Calu3 (cell line): ENCODE measurements at regions of chr7 and their contacts with region 1.

Region 1: GRCh38 chr7:28926871-28927597 is 31.1 kb downstream of the TRIL start:
- DNase-seq: peak; percentile 71
- H3K4me3 Mint-ChIP-seq: peak overlapping the region; percentile 78
- H3K27ac Mint-ChIP-seq: peak overlapping the region; percentile 7
- H3K4me1 Mint-ChIP-seq: peaks cover 27% of the 10 kb centered on the region
- H3K27me3 Mint-ChIP-seq: no peaks in the 10 kb centered on the region
- CTCF ChIP-seq: peak; percentile 81

Region 2: DNA sequence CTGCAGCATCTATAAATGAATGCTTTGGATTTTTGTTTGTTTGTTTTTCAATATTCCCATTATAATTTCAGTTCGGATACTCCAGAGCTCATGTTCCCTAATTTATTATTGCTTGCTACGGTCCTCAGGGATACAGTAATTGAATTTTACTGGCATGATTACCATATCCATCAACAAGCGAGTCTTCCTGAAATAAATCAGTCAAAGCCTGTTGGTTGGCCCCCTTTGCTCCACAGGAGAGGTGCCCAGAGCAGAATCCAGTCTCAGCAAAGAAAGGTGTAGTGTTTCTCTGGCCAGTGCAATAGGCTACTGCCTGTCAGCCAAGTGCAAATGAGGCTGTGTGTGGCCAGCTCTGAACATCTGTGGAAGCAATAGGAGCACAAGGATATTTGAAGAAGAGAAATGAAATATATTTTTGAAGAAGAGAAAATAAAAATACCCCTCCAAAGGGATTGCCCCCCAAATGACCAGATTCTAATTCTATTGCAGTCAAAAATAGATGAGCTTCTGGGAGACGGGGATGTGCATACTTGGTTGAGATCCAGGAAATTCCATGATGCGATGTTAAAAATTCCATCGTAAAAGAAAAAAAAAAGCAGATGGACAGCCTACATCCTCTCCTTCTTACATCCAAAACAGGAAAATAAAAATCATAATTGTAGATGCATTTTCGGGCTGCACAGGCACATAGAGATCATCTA is 13.0 kb after region 1 on chr7:
- CTCF ChIA-PET with region 1: interaction called, 11 read pairs
- intact Hi-C with region 1: no loop called
- DNase-seq: no peak
- H3K4me3 Mint-ChIP-seq: no peak overlapping the region
- H3K27ac Mint-ChIP-seq: no peak overlapping the region
- H3K4me1 Mint-ChIP-seq: no peaks in the 10 kb centered on the region
- H3K27me3 Mint-ChIP-seq: no peaks in the 10 kb centered on the region
- CTCF ChIP-seq: no peak

Region 3: GRCh38 chr7:28980451-28980891 is 53.4 kb after region 1 on chr7:
- CTCF ChIA-PET with region 1: no interaction called
- intact Hi-C with region 1: no loop called
- DNase-seq: no peak
- H3K4me3 Mint-ChIP-seq: no peak overlapping the region
- H3K27ac Mint-ChIP-seq: no peak overlapping the region
- H3K4me1 Mint-ChIP-seq: peaks cover 30% of the 10 kb centered on the region
- H3K27me3 Mint-ChIP-seq: no peaks in the 10 kb centered on the region
- CTCF ChIP-seq: no peak

Region 4: GRCh38 chr7:29105752-29106668 is 179.0 kb after region 1 on chr7:
- CTCF ChIA-PET with region 1: interaction called, 174 read pairs
- intact Hi-C with region 1: loop called (anchors 1 kb)
- DNase-seq: peak; percentile 75
- H3K4me3 Mint-ChIP-seq: no peak overlapping the region
- H3K27ac Mint-ChIP-seq: no peak overlapping the region
- H3K4me1 Mint-ChIP-seq: peaks cover 37% of the 10 kb centered on the region
- H3K27me3 Mint-ChIP-seq: no peaks in the 10 kb centered on the region
- CTCF ChIP-seq: peak; percentile 86

Region 5: GRCh38 chr7:29345600-29345999 is 418.6 kb after region 1 on chr7:
- CTCF ChIA-PET with region 1: interaction called, 27 read pairs
- intact Hi-C with region 1: loop called (anchors 1 kb)
- DNase-seq: peak; percentile 81
- H3K4me3 Mint-ChIP-seq: no peak overlapping the region
- H3K27ac Mint-ChIP-seq: no peak overlapping the region
- H3K4me1 Mint-ChIP-seq: no peaks in the 10 kb centered on the region
- H3K27me3 Mint-ChIP-seq: no peaks in the 10 kb centered on the region
- CTCF ChIP-seq: no peak

Region 6: GRCh38 chr7:29609162-29610037 is 682.4 kb after region 1 on chr7:
- CTCF ChIA-PET with region 1: no interaction called
- intact Hi-C with region 1: loop called (anchors 10 kb)
- DNase-seq: peak; percentile 73
- H3K4me3 Mint-ChIP-seq: peak overlapping the region; percentile 59
- H3K27ac Mint-ChIP-seq: peak overlapping the region; percentile 75
- H3K4me1 Mint-ChIP-seq: peaks cover 56% of the 10 kb centered on the region
- H3K27me3 Mint-ChIP-seq: no peaks in the 10 kb centered on the region
- CTCF ChIP-seq: peak; percentile 97